Left colon (tissue), 2 donors: ENCODE measurements at regions of chr1 and their contacts with region 1.

Region 1: GRCh38 chr1:202710070-202711045 is at the start of gene SYT2:
- DNase-seq: peak; percentile 32 to 34
- ATAC-seq: peak; percentile 73
- total RNA-seq, gene SYT2: 0.06 to 0.42 TPM

Region 2: DNA sequence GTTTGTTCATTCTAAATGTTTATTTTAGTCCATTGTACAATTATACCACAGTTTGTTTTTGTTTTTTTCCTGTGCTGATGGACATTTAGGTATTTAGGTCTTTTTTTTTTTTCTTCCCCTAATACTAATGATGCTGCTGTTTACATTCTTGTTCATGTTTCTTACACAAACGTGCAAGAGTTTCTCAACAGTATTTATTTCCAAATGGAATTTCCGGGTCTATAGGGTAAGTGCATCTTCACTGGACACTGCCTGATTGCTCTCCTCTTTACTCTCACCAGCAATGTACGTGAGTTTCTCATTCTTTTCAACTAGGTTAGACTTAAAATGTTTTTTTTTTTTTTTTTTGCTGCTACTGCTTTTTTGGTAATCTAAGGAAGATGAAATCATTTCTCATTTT is 239.1 kb before region 1 on chr1:
- intact Hi-C with region 1: loop called in 1 of 2 experiments (anchors 10 kb)
- DNase-seq: no peak
- ATAC-seq: no peak

Region 3: DNA sequence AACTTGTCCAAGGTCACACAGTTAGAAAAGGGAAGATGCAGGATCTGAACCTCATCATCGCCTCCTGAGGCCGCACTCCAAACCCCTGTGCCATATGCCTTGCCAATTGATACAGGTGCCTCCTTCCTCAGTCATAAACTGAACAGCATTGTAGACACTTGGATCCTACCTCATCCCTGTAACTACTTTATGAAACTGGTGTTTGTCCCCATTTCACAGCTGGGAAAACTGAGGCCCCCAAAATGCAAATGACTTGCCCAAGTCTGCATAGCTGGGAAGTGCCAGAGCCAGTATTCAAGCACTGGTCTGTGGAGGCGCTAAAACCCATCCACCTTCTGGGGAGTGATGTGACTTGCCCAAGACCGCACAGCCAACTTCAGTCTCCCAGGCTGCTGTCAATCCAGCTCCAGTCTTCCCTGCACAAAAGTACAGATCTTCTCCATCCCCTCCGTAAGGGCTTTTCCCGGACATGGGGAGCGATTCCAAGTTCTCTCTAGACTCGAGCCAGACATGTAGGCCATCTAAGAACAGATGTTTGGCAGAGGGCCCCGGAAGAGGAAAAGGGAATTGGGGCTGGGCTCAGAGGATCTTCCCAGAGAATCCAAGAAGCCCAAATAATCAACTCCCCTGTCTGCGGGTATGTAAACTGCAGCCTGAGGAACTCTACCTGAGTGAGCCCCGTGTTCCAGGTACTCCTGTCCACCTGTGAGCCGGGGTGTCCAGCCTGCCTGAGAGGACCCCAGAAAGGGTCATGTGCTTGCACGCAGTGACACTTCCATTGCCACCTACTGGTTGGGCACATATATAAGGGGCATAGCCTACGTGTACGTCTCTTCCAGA is 60.6 kb before region 1 on chr1:
- intact Hi-C with region 1: loop called in 1 of 2 experiments (anchors 5 kb)
- DNase-seq: no peak
- ATAC-seq: no peak